Psoas muscle (tissue), 8 donors: ENCODE measurements at regions of chrX and their contacts with region 1.

Region 1: GRCh38 chrX:47193475-47194193 is at the start of gene UBA1:
- DNase-seq: peak; percentile 96 to 98
- ATAC-seq: peak; percentile 88 to 91 (median 90)
- H3K4me3 ChIP-seq: peak within 1 kb of the TSS; percentile 83
- H3K27ac ChIP-seq: peak within 1 kb of the TSS; percentile 97
- H3K4me1 ChIP-seq: peaks cover 43% of the 10 kb centered on the region
- H3K27me3 ChIP-seq: no peaks in the 10 kb centered on the region
- CTCF ChIP-seq: peak; percentile 92
- total RNA-seq, gene UBA1: 145 to 230 (median 187) TPM

Region 2: GRCh38 chrX:47311932-47312774 is 118.5 kb after region 1 on chrX:
- intact Hi-C with region 1: no loop called
- DNase-seq: no peak
- ATAC-seq: no peak
- H3K4me3 ChIP-seq: no peak overlapping the region
- H3K27ac ChIP-seq: no peak overlapping the region
- H3K4me1 ChIP-seq: no peaks in the 10 kb centered on the region
- H3K27me3 ChIP-seq: peaks cover 0 to 39% (median 0%) of the 10 kb centered on the region in 3 donors
- CTCF ChIP-seq: peak; percentile 24

Region 3: GRCh38 chrX:47384502-47384901 is 190.9 kb after region 1 on chrX:
- intact Hi-C with region 1: loop called (anchors 1 to 5 kb)
- DNase-seq: no peak
- ATAC-seq: peak in 3 of 4 donors; percentile 56 to 71 (median 58)
- H3K4me3 ChIP-seq: no peak overlapping the region
- H3K27ac ChIP-seq: no peak overlapping the region
- H3K4me1 ChIP-seq: no peaks in the 10 kb centered on the region
- H3K27me3 ChIP-seq: peaks cover 0 to 9% (median 0%) of the 10 kb centered on the region in 3 donors
- CTCF ChIP-seq: peak; percentile 67